ENCODE measurements at regions of chr7 and their contacts with region 1.

Region 1: DNA sequence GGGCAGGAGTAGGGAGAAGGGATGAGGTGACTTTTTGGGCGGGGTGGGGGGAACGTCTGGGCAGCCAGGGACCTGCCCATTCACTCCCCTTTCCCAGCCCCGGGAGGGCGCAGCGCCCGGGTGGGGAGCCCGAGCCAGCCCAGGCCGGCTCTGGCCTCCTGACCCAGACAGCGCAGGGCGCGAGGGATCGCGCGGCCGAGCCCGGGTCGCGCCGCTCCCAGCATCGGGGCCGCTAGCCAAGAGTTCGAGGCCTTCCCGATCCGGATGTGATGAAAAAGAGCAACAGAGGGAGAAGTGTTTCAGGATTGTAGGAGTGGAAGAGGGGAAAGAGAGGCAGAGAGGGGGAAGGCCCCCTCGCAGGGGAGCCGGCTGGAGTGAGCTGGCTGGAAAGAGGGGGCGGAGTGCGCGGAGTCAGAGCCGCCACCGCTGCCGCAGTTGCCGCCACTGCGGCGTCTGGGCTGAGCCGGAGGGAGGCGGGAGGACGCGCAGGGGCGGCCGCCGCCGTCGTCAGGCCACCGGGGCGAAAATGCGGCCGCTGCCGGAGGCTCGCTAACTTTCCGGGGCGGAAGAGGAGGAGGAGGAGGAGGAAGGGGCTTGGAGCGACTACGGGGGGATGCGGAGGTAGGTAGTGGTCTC is at the start of gene MDFIC:
- DNase-seq: peak; percentile 68 to 84 (median 73)
- ATAC-seq: peak; percentile 56 to 95 (median 92)
- H3K4me3 ChIP-seq: peak within 1 kb of the TSS; percentile 64 to 92 (median 84)
- H3K27ac ChIP-seq: peak within 1 kb of the TSS; percentile 83 to 96 (median 92)
- H3K4me1 ChIP-seq: peaks cover 0 to 42% (median 17%) of the 10 kb centered on the region in 12 donors
- H3K27me3 ChIP-seq: no peaks in the 10 kb centered on the region
- CTCF ChIP-seq: peak in 4 of 12 donors; percentile 6 to 41 (median 21)
- POLR2A ChIP-seq: peak in 1 of 2 donors; percentile 44
- total RNA-seq, gene MDFIC: 20.6 to 51.8 (median 34.5) TPM

Region 2: GRCh38 chr7:114944745-114945625 is 22.9 kb after region 1 on chr7:
- intact Hi-C with region 1: no loop called
- DNase-seq: peak; percentile 71 to 83 (median 78)
- ATAC-seq: peak; percentile 86 to 99 (median 94)
- H3K4me3 ChIP-seq: peak overlapping the region in 7 of 12 donors; percentile 6 to 42 (median 36)
- H3K27ac ChIP-seq: peak overlapping the region in 10 of 12 donors; percentile 26 to 76 (median 50)
- H3K4me1 ChIP-seq: peaks cover 0 to 73% (median 4%) of the 10 kb centered on the region in 12 donors
- H3K27me3 ChIP-seq: no peaks in the 10 kb centered on the region
- CTCF ChIP-seq: no peak
- POLR2A ChIP-seq: no peak

Region 3: DNA sequence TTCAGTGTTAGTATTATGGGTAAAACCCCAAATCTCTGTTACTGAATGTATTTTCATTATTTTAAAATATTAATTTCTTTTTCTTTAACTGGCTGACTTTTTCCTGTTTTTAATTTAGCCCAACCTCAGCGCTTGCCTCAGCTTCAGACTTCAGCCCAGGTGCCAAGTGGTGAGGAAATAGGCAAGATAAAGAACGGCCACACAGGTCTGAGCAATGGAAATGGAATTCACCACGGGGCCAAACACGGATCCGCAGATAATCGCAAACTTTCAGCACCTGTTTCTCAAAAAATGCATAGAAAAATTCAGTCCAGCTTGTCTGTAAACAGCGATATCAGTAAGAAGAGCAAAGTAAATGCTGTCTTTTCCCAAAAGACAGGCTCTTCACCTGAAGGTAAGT is 57.3 kb after region 1 on chr7:
- intact Hi-C with region 1: loop called in 2 of 10 experiments (anchors 10 kb)
- DNase-seq: peak in 4 of 5 donors; percentile 65 to 76 (median 70)
- ATAC-seq: peak; percentile 89 to 97 (median 94)
- H3K4me3 ChIP-seq: peak overlapping the region in 11 of 12 donors; percentile 4 to 49 (median 42)
- H3K27ac ChIP-seq: peak overlapping the region; percentile 45 to 80 (median 68)
- H3K4me1 ChIP-seq: peaks cover 0 to 65% (median 33%) of the 10 kb centered on the region in 12 donors
- H3K27me3 ChIP-seq: no peaks in the 10 kb centered on the region
- CTCF ChIP-seq: no peak
- POLR2A ChIP-seq: no peak

Region 4: GRCh38 chr7:115008465-115009114 is 86.5 kb after region 1 on chr7:
- intact Hi-C with region 1: loop called in 1 of 10 experiments (anchors 5 kb)
- DNase-seq: peak; percentile 80 to 89 (median 82)
- ATAC-seq: peak; percentile 90 to 94 (median 94)
- H3K4me3 ChIP-seq: no peak overlapping the region
- H3K27ac ChIP-seq: peak overlapping the region in 8 of 12 donors; percentile 5 to 72 (median 22)
- H3K4me1 ChIP-seq: peaks cover 0 to 61% (median 27%) of the 10 kb centered on the region in 12 donors
- H3K27me3 ChIP-seq: no peaks in the 10 kb centered on the region
- CTCF ChIP-seq: peak in 1 of 12 donors; percentile 14
- POLR2A ChIP-seq: no peak

Region 5: GRCh38 chr7:115135769-115136410 is 213.8 kb after region 1 on chr7:
- intact Hi-C with region 1: loop called in 1 of 10 experiments (anchors 5 kb)
- DNase-seq: no peak
- ATAC-seq: peak in 3 of 4 donors; percentile 53 to 77 (median 66)
- H3K4me3 ChIP-seq: no peak overlapping the region
- H3K27ac ChIP-seq: peak overlapping the region in 2 of 12 donors; percentile 2 to 21
- H3K4me1 ChIP-seq: peaks cover 0 to 18% (median 0%) of the 10 kb centered on the region in 12 donors
- H3K27me3 ChIP-seq: no peaks in the 10 kb centered on the region
- CTCF ChIP-seq: no peak
- POLR2A ChIP-seq: no peak

Region 6: GRCh38 chr7:115217373-115217772 is 295.2 kb after region 1 on chr7:
- intact Hi-C with region 1: loop called in 3 of 10 experiments (anchors 5 kb)
- DNase-seq: no peak
- ATAC-seq: no peak
- H3K4me3 ChIP-seq: no peak overlapping the region
- H3K27ac ChIP-seq: no peak overlapping the region
- H3K4me1 ChIP-seq: peaks cover 0 to 6% (median 0%) of the 10 kb centered on the region in 12 donors
- H3K27me3 ChIP-seq: no peaks in the 10 kb centered on the region
- CTCF ChIP-seq: peak in 11 of 12 donors; percentile 18 to 59 (median 34)
- POLR2A ChIP-seq: no peak

Measured in heart left ventricle (tissue), 16 donors.